IMR-90 (cell line): ENCODE measurements at regions of chr12 and their contacts with region 1.

Region 1: DNA sequence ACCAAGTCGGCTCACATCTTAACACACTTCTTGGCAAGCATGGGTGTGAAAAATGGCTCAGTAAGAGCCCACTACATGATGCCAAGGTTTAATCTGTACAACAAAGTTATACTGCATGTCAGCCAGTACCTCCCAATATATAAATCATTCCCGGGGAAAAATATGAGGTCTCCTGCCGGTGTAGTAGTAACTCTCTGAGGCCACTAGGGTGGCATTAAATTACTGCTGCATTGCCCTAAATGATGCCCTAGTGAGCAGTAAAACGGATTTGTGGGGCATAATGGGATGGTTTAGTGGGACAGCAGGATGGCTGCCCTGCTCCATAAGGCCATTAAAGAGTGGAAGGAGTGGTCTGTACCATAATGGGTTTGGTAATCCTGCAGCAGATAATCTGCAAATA is 267.7 kb downstream of the MED13L start:
- DNase-seq: no peak
- ATAC-seq: no peak
- H3K4me3 ChIP-seq: no peak overlapping the region
- H3K27ac ChIP-seq: no peak overlapping the region
- H3K4me1 ChIP-seq: no peaks in the 10 kb centered on the region
- H3K27me3 ChIP-seq: no peaks in the 10 kb centered on the region
- CTCF ChIP-seq: peak; percentile 18; the same call in 1 of the 2 replicates
- POLR2A ChIP-seq: no peak
- RAD21 ChIP-seq: no peak

Region 2: GRCh38 chr12:116609319-116610114 is 599.7 kb after region 1 on chr12:
- CTCF ChIA-PET with region 1: no interaction called
- POLR2A ChIA-PET with region 1: no interaction called
- dilution Hi-C with region 1: no loop called
- in situ Hi-C with region 1: no loop called
- intact Hi-C with region 1: loop called (anchors 5 kb)
- DNase-seq: no peak
- ATAC-seq: no peak
- H3K4me3 ChIP-seq: no peak overlapping the region
- H3K27ac ChIP-seq: no peak overlapping the region
- H3K4me1 ChIP-seq: no peaks in the 10 kb centered on the region
- H3K27me3 ChIP-seq: peaks cover 2% of the 10 kb centered on the region; the same call in 1 of the 2 replicates
- CTCF ChIP-seq: peak; percentile 37
- POLR2A ChIP-seq: no peak
- RAD21 ChIP-seq: peak; percentile 21; the same call in 1 of the 2 replicates